ENCODE measurements at regions of chr7 and their contacts with region 1.

Region 1: DNA sequence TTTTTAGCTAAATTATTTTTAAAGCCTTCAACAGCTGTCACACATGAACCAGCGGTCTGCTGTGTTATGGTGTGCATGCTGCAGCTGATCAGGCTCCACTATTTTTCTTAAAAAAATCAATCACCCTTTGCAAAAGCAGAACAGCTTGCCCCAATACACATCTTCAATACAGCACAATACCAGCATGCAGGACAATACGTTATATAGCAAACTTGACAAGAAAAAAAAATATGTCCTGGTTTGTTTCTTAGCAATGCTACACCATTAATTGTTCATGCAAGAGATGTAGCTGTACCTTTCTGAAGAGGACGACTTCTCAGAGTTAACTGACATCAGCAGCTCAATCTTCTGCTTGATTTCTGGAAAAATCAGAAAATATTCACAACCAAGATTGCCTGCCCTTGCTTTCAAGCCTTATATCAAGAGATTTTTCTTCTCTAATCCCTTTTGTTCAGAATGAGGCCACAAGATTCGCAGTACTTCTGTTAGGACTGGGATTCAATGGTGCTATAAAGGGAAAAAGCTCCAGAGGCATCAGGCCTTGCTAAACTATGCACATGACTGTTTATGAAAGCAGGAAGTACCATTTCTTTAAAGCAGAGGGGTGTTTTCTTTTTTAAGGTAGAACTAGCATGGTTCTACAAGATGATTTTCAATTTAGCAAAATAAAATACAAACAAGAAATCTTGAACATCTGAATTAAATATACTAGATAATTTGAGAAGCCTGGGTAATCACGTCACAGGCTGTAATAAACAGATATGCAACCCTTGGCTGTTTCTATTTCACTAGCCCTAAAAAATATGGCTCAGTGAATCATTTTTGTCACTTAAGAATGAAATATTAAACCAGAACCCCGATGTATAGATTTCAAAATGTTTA is 120.0 kb downstream of the SRPK2 start:
- DNase-seq: peak; percentile 54
- ATAC-seq: peak; percentile 77
- H3K4me3 ChIP-seq: peak overlapping the region; percentile 72
- H3K27ac ChIP-seq: peak overlapping the region; percentile 77
- H3K4me1 ChIP-seq: peaks cover 37% of the 10 kb centered on the region
- H3K27me3 ChIP-seq: no peaks in the 10 kb centered on the region
- CTCF ChIP-seq: no peak

Region 2: DNA sequence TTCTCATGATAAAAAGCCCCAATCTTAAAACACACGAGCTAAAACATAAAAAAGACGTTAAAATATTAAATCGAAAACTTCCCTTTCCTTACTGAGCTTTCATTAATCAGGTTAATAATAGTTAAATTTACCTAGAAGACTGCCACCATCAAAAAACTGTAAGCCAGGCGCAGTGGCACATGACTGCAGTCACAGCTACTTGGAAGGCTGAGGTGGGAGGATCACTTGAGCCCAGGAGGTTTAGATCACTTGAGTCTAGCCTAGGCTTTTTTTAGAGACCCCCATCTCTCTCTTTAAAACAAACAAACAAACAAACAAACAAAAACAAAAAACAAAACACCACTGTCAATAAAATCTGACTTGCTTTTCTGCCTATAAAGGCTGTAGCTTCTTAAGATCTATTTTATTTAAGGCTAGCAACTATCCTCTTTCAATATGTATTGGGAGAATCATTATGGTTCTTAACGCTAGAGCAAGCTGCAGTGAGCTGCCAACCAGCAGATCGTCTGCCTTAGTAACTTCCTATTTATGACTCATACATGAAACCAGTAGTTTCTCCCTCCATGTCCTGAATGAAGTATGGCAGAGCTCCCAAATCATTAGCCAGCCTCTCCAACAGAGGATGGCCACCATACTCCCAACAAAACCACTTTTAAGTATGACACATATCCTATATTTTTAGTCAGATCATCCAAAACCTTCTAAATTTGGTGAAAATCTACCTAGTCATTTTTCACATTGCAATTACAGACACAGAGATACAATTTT is 43.7 kb before region 1 on chr7:
- CTCF ChIA-PET with region 1: no interaction called
- POLR2A ChIA-PET with region 1: interaction called, 8 read pairs
- intact Hi-C with region 1: loop called (anchors 2 kb)
- DNase-seq: peak; percentile 86
- ATAC-seq: peak; percentile 98
- H3K4me3 ChIP-seq: peak overlapping the region; percentile 7; the same call in 1 of the 2 replicates
- H3K27ac ChIP-seq: peak overlapping the region; percentile 86
- H3K4me1 ChIP-seq: peaks cover 23% of the 10 kb centered on the region
- H3K27me3 ChIP-seq: no peaks in the 10 kb centered on the region
- CTCF ChIP-seq: no peak

Region 3: GRCh38 chr7:105304040-105304895 is 35.5 kb after region 1 on chr7:
- CTCF ChIA-PET with region 1: no interaction called
- POLR2A ChIA-PET with region 1: no interaction called
- intact Hi-C with region 1: loop called (anchors 1 kb)
- DNase-seq: peak; percentile 67
- ATAC-seq: peak; percentile 96
- H3K4me3 ChIP-seq: peak overlapping the region; percentile 41; the same call in 1 of the 2 replicates
- H3K27ac ChIP-seq: peak overlapping the region; percentile 62
- H3K4me1 ChIP-seq: peaks cover 18% of the 10 kb centered on the region
- H3K27me3 ChIP-seq: no peaks in the 10 kb centered on the region
- CTCF ChIP-seq: no peak